ENCODE measurements at regions of chr7 and their contacts with region 1.

Region 1: GRCh38 chr7:128135515-128136214 is 104.4 kb upstream of the LRRC4 start:
- DNase-seq: peak; percentile 83
- ATAC-seq: peak; percentile 92
- H3K4me3 Mint-ChIP-seq: peak overlapping the region; percentile 63
- H3K27ac Mint-ChIP-seq: no peak overlapping the region
- H3K4me1 Mint-ChIP-seq: peaks cover 21% of the 10 kb centered on the region
- H3K27me3 Mint-ChIP-seq: peaks cover 27% of the 10 kb centered on the region

Region 2: DNA sequence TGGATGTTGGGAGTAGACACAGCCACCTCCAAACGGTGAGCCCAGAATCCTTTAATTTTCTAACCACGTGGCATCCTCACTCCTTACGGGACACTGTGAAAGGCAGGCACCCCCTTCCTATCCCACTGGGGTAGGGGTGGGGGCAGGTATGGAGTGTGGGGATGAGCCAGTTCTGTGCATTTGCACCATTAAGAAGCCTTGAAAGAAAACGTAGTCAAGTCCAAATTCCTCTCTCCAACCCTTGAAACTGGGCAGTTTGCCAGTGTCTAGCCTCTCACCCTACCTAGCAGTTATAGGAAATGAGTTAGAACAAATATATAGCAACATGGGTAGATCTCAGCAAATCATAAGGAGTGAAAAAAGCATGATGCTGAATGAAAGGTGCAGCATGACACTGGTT is 13.0 kb after region 1 on chr7:
- CTCF ChIA-PET with region 1: interaction called, 24 read pairs
- POLR2A ChIA-PET with region 1: no interaction called
- intact Hi-C with region 1: no loop called
- DNase-seq: no peak
- ATAC-seq: no peak
- H3K4me3 Mint-ChIP-seq: no peak overlapping the region
- H3K27ac Mint-ChIP-seq: no peak overlapping the region
- H3K4me1 Mint-ChIP-seq: no peaks in the 10 kb centered on the region
- H3K27me3 Mint-ChIP-seq: peaks cover 12% of the 10 kb centered on the region

Region 3: DNA sequence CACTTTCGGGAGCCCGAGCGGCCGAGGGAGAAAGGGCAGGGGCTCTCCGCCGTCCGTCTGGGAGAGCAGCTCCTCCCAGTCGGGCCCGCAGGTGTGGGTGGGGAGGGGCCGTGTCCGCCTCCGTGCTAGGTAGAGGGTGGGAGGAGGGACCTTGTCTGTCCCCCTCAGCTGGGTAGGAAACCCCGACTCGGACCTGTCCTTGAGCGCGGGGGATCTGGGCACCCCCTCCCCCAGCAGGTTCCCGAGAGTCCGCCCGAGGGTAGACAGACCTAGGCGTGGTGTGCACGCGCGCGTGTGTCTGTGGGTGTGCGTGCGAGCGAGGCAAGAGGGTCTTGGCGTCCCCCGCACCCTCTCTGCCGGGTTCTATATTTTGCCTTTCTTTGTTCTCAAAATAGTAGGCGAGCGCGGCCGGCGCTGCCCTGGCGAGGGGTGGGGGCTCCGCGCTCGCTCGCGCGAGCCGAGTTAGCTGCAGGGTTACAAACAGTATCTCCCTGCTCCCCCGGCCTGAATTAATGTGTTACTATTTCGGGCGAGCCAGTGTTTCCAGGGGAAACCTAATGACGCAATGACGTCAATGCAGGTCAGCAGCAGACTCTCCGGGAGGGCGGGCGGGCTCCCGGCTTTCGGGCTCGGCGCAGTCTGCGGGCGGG is 31.5 kb after region 1 on chr7:
- CTCF ChIA-PET with region 1: interaction called, 5 read pairs
- POLR2A ChIA-PET with region 1: no interaction called
- intact Hi-C with region 1: loop called in 1 of 2 experiments (anchors 2 kb)
- DNase-seq: peak; percentile 45
- ATAC-seq: peak; percentile 44
- H3K4me3 Mint-ChIP-seq: peak overlapping the region; percentile 61
- H3K27ac Mint-ChIP-seq: no peak overlapping the region
- H3K4me1 Mint-ChIP-seq: peaks cover 5% of the 10 kb centered on the region
- H3K27me3 Mint-ChIP-seq: peaks cover 49% of the 10 kb centered on the region

Region 4: GRCh38 chr7:128266883-128267607 is 131.4 kb after region 1 on chr7:
- CTCF ChIA-PET with region 1: no interaction called
- POLR2A ChIA-PET with region 1: no interaction called
- intact Hi-C with region 1: no loop called
- DNase-seq: no peak
- ATAC-seq: no peak
- H3K4me3 Mint-ChIP-seq: no peak overlapping the region
- H3K27ac Mint-ChIP-seq: no peak overlapping the region
- H3K4me1 Mint-ChIP-seq: no peaks in the 10 kb centered on the region
- H3K27me3 Mint-ChIP-seq: peaks cover 19% of the 10 kb centered on the region